Activated B cell treated with CpG ODN at 0.5 μM for 24 hours (primary cell): ENCODE measurements at regions of chr5 and their contacts with region 1.

Region 1: DNA sequence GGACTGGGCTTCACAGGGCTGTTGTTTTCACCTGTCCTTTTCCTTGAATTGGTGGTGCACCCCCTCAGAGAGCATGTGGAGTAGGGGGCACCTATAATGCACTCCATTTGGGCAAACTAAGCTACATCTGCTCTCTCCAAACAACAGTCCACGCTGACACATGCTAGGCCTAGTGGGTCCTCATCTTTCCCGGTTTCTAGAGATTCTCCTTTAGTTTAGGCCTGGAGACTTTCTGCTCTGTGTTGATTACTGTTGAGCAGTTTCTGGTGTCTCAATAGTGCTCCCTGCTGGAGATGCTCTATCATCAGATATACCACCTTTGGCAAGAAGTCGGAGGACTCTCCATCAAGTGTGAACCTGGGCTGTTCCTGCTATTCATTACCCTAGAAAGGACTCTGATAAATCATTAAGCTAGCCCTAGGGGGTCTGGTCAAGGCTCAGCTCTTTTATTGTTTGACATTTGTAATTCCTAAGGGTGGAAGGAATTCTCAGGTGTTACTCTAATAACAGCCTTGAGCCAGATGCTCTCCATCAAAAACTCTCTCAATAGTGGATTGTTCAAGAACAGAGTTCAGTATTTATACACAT is 64.0 kb upstream of the FYB1 start:
- DNase-seq: no peak
- ATAC-seq: peak; percentile 75
- H3K4me3 Mint-ChIP-seq: no peak overlapping the region
- H3K27ac Mint-ChIP-seq: no peak overlapping the region
- H3K4me1 Mint-ChIP-seq: peaks cover 2% of the 10 kb centered on the region
- H3K27me3 Mint-ChIP-seq: peaks cover 15% of the 10 kb centered on the region
- CTCF ChIP-seq: peak; percentile 38

Region 2: DNA sequence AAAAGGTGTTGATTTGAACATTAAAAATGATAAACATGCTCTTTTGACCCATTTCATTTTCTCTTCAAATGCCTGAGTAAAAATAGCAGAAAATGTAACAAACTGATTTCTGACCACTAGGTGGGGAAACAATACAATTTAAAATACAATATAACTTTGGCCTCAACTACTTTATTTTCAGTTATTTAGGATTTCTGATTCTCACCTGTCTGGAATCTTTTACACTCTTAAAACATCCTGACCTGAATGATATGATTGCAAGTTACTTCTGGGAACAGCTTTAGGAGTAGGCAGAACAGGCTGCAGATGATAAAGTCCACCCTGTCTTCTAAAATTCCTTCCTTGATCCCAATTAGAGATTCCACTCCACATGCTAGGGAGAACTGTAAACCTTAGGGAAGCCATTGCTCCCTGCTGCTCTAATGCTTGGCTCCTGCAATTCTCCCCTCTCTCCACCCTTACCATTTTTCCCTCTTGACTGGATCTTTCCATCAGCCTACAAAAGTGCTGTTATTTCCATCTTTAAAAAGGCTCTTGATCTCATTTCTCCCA is 134.3 kb before region 1 on chr5:
- CTCF ChIA-PET with region 1: interaction called, 4 read pairs
- POLR2A ChIA-PET with region 1: no interaction called
- intact Hi-C with region 1: loop called (anchors 1 kb)
- DNase-seq: no peak
- ATAC-seq: no peak
- H3K4me3 Mint-ChIP-seq: no peak overlapping the region
- H3K27ac Mint-ChIP-seq: no peak overlapping the region
- H3K4me1 Mint-ChIP-seq: peaks cover 27% of the 10 kb centered on the region
- H3K27me3 Mint-ChIP-seq: no peaks in the 10 kb centered on the region
- CTCF ChIP-seq: no peak

Region 3: GRCh38 chr5:39211773-39212172 is 71.6 kb before region 1 on chr5:
- CTCF ChIA-PET with region 1: interaction called, 90 read pairs
- POLR2A ChIA-PET with region 1: no interaction called
- intact Hi-C with region 1: no loop called
- DNase-seq: no peak
- ATAC-seq: no peak
- H3K4me3 Mint-ChIP-seq: no peak overlapping the region
- H3K27ac Mint-ChIP-seq: no peak overlapping the region
- H3K4me1 Mint-ChIP-seq: peaks cover 14% of the 10 kb centered on the region
- H3K27me3 Mint-ChIP-seq: peaks cover 9% of the 10 kb centered on the region
- CTCF ChIP-seq: no peak